ENCODE measurements at regions of chr4 and their contacts with region 1.

Region 1: GRCh38 chr4:5998333-5998936 is 19.8 kb downstream of the C4orf50 start:
- DNase-seq: peak in 4 of 5 donors; percentile 23 to 33 (median 30)
- H3K4me3 ChIP-seq: no peak overlapping the region
- H3K4me3 Mint-ChIP-seq: no peak overlapping the region
- H3K27ac ChIP-seq: no peak overlapping the region
- H3K27ac Mint-ChIP-seq: no peak overlapping the region
- H3K4me1 ChIP-seq: no peaks in the 10 kb centered on the region
- H3K4me1 Mint-ChIP-seq: peaks cover 0 to 4% (median 1%) of the 10 kb centered on the region in 4 donors
- H3K27me3 ChIP-seq: no peaks in the 10 kb centered on the region
- H3K27me3 Mint-ChIP-seq: peaks cover 2 to 7% of the 10 kb centered on the region in 2 donors

Region 2: DNA sequence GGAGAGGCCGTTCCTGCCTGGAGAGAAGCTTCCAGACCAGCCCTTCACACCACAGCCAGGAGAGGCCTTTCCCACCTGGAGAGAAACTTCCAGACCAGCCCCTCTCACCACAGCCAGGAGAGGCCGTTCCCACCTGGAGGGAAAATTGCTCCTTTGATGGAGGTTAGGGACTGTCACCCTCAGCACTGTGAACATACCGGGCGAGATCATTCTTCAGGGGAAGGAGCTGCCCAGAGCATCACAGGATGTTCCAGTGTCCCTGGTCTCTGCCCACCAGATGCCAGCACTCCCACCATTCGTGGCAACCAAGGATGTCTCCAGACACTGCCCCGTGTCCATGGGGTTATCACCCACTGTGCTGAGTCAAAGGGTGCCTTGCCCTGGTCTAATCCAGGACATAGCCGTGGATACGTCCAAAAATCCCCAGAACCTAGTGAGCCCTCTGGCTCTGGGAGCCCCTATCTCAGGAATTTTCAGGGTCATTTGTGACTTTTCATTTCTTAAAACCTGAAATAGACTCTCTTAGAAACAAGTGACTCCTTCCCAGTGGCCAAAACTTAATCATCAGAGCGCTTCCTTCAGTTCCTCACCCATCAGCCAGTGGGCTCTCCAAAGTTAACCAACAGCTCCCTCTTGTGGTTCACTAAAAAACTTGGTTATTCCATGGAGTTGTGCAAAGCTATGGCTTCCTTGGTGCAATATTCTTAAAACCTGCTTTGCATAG is 185.8 kb before region 1 on chr4:
- CTCF ChIA-PET with region 1: no interaction called
- POLR2A ChIA-PET with region 1: no interaction called
- intact Hi-C with region 1: no loop called
- DNase-seq: peak in 4 of 5 donors; percentile 6 to 19 (median 18)
- H3K4me3 ChIP-seq: no peak overlapping the region
- H3K4me3 Mint-ChIP-seq: no peak overlapping the region
- H3K27ac ChIP-seq: no peak overlapping the region
- H3K27ac Mint-ChIP-seq: no peak overlapping the region
- H3K4me1 ChIP-seq: no peaks in the 10 kb centered on the region
- H3K4me1 Mint-ChIP-seq: no peaks in the 10 kb centered on the region
- H3K27me3 ChIP-seq: no peaks in the 10 kb centered on the region
- H3K27me3 Mint-ChIP-seq: no peaks in the 10 kb centered on the region

Region 3: DNA sequence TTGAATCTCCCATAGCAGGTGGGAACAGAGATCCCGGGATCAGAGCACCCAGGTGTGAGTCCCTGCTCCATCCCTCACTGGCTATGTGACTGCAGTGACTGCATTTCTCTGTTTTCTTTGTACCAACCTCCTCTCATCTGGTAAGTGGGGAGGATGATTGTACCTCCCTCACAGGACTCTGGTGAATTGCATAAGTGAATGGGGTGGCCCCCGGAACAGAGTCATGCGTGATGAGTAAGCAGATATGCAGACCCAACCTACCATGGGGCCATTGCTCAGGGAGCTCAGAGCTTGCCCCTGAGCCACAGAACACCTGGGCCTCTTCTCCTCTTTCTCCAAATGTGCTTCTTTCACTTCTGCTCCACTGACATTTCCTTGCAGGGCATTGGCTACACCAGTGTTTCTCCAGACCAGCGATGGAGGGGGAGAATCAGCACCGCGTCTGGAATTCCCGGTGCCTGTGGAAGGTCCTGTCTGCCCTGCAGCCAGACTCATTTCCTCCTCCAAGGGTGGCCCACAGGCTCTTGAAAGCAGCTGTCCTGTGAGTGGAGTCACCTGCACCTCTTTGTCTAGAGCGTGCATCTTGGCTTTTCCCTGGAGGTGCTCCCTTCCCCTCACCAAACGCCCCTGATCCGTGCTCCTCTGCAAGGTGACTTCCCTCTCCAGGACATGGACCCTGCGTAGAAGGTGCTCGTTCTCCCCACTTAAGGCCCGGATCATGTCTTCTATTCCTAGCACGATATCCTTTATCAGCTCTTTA is 10.2 kb before region 1 on chr4:
- CTCF ChIA-PET with region 1: interaction called, 18 read pairs
- POLR2A ChIA-PET with region 1: no interaction called
- intact Hi-C with region 1: no loop called
- DNase-seq: no peak
- H3K4me3 ChIP-seq: no peak overlapping the region
- H3K4me3 Mint-ChIP-seq: no peak overlapping the region
- H3K27ac ChIP-seq: no peak overlapping the region
- H3K27ac Mint-ChIP-seq: no peak overlapping the region
- H3K4me1 ChIP-seq: no peaks in the 10 kb centered on the region
- H3K4me1 Mint-ChIP-seq: no peaks in the 10 kb centered on the region
- H3K27me3 ChIP-seq: no peaks in the 10 kb centered on the region
- H3K27me3 Mint-ChIP-seq: peaks cover 1 to 2% of the 10 kb centered on the region in 2 donors

Measured in CD4-positive, alpha-beta memory T cell (primary cell).